HEK293 (cell line): ENCODE measurements at regions of chr22 and their contacts with region 1.

Region 1: DNA sequence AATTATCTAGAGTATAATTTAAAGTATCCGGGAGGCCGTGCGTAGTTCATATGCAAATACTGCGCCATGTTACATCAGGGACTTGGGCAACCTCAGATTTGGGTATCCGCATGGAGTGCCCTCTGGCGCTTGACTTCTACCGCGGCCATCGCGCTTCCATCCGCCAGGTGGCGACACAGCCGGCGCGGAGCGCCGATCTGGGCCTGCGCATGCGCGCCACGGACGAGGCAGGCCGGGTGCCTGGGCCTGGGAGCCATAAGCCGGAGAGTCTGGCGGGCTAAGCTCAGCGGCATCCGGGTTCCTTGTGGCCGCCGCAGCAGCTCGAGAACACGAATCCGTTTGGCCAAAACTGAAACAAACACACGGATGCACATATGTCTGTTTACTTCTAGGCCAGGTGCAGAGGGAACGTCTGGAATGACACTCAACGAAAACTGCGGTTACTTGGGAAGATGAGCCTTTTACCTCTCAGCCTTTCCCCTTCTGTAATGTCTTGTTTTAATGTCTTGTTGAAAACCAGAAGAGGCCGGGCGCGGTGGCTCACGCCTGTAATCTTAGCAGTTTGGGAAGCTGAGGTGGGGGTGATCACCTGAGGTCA is 21.9 kb downstream of the SNU13 start:
- H3K4me3 ChIP-seq: peak overlapping the region; percentile 42
- H3K27ac ChIP-seq: peak overlapping the region; percentile 99
- H3K4me1 ChIP-seq: no peaks in the 10 kb centered on the region
- CTCF ChIP-seq: peak; percentile 100

Region 2: GRCh38 chr22:41557401-41558240 is 109.1 kb before region 1 on chr22:
- CTCF ChIA-PET with region 1: no interaction called
- POLR2A ChIA-PET with region 1: no interaction called
- H3K4me3 ChIP-seq: no peak overlapping the region
- H3K27ac ChIP-seq: no peak overlapping the region
- H3K4me1 ChIP-seq: no peaks in the 10 kb centered on the region; the same call in 1 of the 2 replicates
- CTCF ChIP-seq: no peak

Region 3: DNA sequence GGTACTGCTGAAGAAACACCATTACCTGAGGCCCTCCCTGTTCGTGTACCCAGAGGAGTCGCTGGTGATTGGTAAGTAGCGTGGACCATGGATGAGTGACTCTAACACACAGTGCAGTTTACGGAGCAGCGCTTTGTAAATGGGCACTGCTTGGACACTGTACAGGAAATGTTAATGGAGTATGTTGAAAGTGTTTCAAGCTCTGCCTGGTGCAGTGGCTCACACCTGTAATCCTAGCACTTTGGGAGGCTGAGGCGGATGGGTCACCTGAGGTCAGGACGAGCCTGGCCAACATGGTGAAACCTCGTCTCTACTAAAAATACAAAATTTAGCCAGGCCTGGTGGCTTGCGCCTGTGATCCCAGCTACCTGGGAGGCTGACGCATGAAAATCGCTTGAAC is 15.9 kb before region 1 on chr22:
- CTCF ChIA-PET with region 1: interaction called, 17 read pairs
- POLR2A ChIA-PET with region 1: interaction called, 5 read pairs
- H3K4me3 ChIP-seq: no peak overlapping the region
- H3K27ac ChIP-seq: no peak overlapping the region
- H3K4me1 ChIP-seq: no peaks in the 10 kb centered on the region
- CTCF ChIP-seq: no peak

Region 4: GRCh38 chr22:41656556-41656955 is 10.2 kb before region 1 on chr22:
- CTCF ChIA-PET with region 1: interaction called, 17 read pairs
- POLR2A ChIA-PET with region 1: interaction called, 4 read pairs
- H3K4me3 ChIP-seq: no peak overlapping the region
- H3K27ac ChIP-seq: 0 out of 2 replicates have a peak overlapping the region, but pooled peaks have one; percentile 16
- H3K4me1 ChIP-seq: no peaks in the 10 kb centered on the region
- CTCF ChIP-seq: no peak

Region 5: GRCh38 chr22:41682033-41682807 is 15.5 kb after region 1 on chr22:
- CTCF ChIA-PET with region 1: interaction called, 43 read pairs
- POLR2A ChIA-PET with region 1: interaction called, 24 read pairs
- H3K4me3 ChIP-seq: peak overlapping the region; percentile 81
- H3K27ac ChIP-seq: peak overlapping the region; percentile 66
- H3K4me1 ChIP-seq: peaks cover 4% of the 10 kb centered on the region; the same call in 1 of the 2 replicates
- CTCF ChIP-seq: no peak

Region 6: GRCh38 chr22:41688365-41689211 is 21.8 kb after region 1 on chr22 and contains the start of gene SNU13:
- CTCF ChIA-PET with region 1: interaction called, 43 read pairs
- POLR2A ChIA-PET with region 1: interaction called, 24 read pairs
- H3K4me3 ChIP-seq: peak within 1 kb of the TSS; percentile 87
- H3K27ac ChIP-seq: peak within 1 kb of the TSS; percentile 92
- H3K4me1 ChIP-seq: no peaks in the 10 kb centered on the region
- CTCF ChIP-seq: peak; percentile 66; the same call in 1 of the 2 replicates